ENCODE measurements at regions of chr2 and their contacts with region 1.

Region 1: GRCh38 chr2:196068271-196069209 is at the start of gene DNAH7:
- DNase-seq: peak; percentile 95
- H3K4me3 Mint-ChIP-seq: peak within 1 kb of the TSS; percentile 87
- H3K27ac Mint-ChIP-seq: no peak within 1 kb of the TSS
- H3K4me1 Mint-ChIP-seq: peaks cover 9% of the 10 kb centered on the region
- H3K27me3 Mint-ChIP-seq: peaks cover 2% of the 10 kb centered on the region
- total RNA-seq, gene DNAH7: 0.29 TPM in 1 of 2 experiments, not detected in the other

Region 2: GRCh38 chr2:194166818-194167217 is 1901.7 kb before region 1 on chr2:
- CTCF ChIA-PET with region 1: no interaction called
- intact Hi-C with region 1: loop called (anchors 2 kb)
- DNase-seq: peak; percentile 33
- H3K4me3 Mint-ChIP-seq: no peak overlapping the region
- H3K27ac Mint-ChIP-seq: no peak overlapping the region
- H3K4me1 Mint-ChIP-seq: no peaks in the 10 kb centered on the region
- H3K27me3 Mint-ChIP-seq: peaks cover 5% of the 10 kb centered on the region

Region 3: GRCh38 chr2:195407782-195408181 is 660.8 kb before region 1 on chr2:
- CTCF ChIA-PET with region 1: interaction called, 3 read pairs
- intact Hi-C with region 1: loop called (anchors 1 kb)
- DNase-seq: no peak
- H3K4me3 Mint-ChIP-seq: no peak overlapping the region
- H3K27ac Mint-ChIP-seq: no peak overlapping the region
- H3K4me1 Mint-ChIP-seq: peaks cover 18% of the 10 kb centered on the region
- H3K27me3 Mint-ChIP-seq: no peaks in the 10 kb centered on the region

Region 4: DNA sequence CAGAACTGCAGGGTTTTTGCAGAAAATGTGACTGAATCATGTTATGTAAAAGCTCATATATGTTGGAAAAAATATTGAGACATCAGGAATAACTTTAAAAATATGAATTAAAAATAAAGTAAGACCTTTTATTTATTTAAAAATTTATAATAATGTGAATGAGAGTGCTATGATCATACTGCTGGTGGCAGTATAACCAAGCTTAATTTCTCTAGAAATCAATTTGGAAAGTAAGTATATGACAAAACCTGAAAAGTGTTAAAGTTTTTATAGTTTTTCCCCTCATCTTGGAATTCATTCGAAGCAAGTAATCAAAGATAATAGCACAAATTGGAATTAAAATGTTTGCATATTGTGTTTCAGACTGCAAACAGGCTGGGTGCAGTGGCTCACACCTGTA is 404.0 kb before region 1 on chr2:
- CTCF ChIA-PET with region 1: interaction called, 18 read pairs
- intact Hi-C with region 1: loop called (anchors 1 kb)
- DNase-seq: no peak
- H3K4me3 Mint-ChIP-seq: no peak overlapping the region
- H3K27ac Mint-ChIP-seq: peak overlapping the region; percentile 41
- H3K4me1 Mint-ChIP-seq: peaks cover 56% of the 10 kb centered on the region
- H3K27me3 Mint-ChIP-seq: no peaks in the 10 kb centered on the region

Region 5: DNA sequence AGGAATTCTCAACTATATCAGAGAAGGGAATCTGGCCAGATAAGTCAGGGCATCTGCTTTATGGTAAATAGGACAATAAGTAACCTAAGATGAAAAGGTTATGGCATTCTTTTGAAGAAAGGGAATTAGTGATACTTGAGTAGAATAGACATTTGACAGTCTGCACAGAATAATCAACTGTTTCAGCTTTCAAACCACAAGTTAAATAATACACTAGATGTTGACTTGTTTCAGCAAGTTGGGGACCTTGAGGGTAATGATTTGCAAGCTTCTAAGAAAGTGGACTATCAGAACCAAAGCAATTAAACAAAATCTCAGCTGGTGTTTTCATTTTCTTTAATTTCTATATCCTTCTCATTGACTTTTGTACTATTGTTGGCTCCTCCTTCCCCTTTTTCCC is 357.1 kb before region 1 on chr2:
- CTCF ChIA-PET with region 1: no interaction called
- intact Hi-C with region 1: no loop called
- DNase-seq: no peak
- H3K4me3 Mint-ChIP-seq: no peak overlapping the region
- H3K27ac Mint-ChIP-seq: no peak overlapping the region
- H3K4me1 Mint-ChIP-seq: peaks cover 2% of the 10 kb centered on the region
- H3K27me3 Mint-ChIP-seq: no peaks in the 10 kb centered on the region

Region 6: DNA sequence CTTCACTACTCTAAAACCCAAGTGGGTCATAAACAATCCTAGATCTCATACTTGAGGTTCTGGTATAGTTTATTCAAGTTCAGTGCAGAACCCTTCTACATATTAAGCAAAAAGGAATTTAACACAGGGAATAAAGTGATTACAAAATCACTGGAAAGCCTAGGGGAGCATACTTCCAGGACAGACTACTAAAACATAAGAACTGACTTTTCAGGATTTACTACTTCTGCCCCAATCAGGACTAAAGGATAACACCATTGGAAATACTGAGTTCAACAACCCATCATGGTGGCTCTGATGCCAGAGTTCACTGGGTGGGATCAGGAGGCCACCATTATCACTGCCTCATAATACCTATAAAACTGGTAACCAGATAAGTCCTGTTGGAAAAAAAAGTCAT is 123.5 kb before region 1 on chr2:
- CTCF ChIA-PET with region 1: no interaction called
- intact Hi-C with region 1: loop called (anchors 2 kb)
- DNase-seq: no peak
- H3K4me3 Mint-ChIP-seq: no peak overlapping the region
- H3K27ac Mint-ChIP-seq: no peak overlapping the region
- H3K4me1 Mint-ChIP-seq: no peaks in the 10 kb centered on the region
- H3K27me3 Mint-ChIP-seq: peaks cover 2% of the 10 kb centered on the region

Region 7: DNA sequence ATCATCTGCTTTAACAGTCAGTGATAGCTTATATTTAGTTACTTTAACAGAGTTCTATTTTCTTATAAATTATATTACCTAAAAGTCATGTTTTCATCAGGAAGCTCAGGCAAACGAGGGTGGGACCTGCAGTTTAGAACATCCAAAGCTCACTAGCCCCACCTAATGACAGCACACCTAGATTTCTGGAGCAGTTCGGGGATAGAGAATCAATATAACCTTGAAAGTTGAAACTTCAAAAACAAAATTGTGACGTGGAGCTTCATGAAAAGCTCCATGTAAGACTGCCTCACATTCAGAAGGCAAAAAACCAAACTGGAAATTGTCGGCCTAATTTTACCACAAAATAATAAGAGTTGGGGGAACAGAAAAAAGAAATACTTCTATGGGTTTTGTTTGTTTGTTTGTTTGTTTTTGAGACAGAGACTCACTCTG is 385.1 kb after region 1 on chr2:
- CTCF ChIA-PET with region 1: interaction called, 13 read pairs
- intact Hi-C with region 1: loop called (anchors 2 kb)
- DNase-seq: peak; percentile 63
- H3K4me3 Mint-ChIP-seq: no peak overlapping the region
- H3K27ac Mint-ChIP-seq: no peak overlapping the region
- H3K4me1 Mint-ChIP-seq: peaks cover 2% of the 10 kb centered on the region
- H3K27me3 Mint-ChIP-seq: peaks cover 16% of the 10 kb centered on the region

Region 8: DNA sequence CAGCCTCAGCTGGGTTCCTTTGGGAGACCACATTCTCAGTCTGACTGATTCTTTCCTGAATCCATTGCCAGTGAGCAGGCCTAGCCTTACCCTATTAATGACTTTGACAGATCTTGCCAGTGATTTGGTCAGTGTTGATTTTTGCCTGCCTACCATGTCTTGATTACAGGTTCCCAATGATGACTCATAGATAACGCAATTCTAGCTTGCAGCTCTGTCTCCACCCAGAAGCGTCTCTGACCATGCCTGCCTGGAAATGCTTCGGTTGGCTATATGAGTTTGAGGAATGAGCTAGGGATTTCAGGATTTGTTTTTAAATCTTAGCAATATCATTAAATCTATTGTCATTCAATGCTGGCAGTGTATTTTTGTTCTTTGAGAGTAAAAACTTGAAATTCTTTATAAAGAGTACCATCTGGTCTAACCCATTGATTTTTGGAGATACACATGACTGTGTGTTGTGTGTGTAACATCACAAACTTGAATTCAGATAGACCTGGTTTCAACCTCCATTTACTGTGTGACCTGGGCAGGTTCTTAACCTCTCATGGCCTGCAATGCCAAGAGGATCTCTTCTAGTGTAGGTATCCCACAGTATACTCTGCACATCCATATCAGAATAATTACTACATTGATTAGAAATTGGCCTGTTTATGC is 628.0 kb after region 1 on chr2:
- CTCF ChIA-PET with region 1: no interaction called
- intact Hi-C with region 1: no loop called
- DNase-seq: no peak
- H3K4me3 Mint-ChIP-seq: no peak overlapping the region
- H3K27ac Mint-ChIP-seq: no peak overlapping the region
- H3K4me1 Mint-ChIP-seq: no peaks in the 10 kb centered on the region
- H3K27me3 Mint-ChIP-seq: peaks cover 4% of the 10 kb centered on the region

Region 9: DNA sequence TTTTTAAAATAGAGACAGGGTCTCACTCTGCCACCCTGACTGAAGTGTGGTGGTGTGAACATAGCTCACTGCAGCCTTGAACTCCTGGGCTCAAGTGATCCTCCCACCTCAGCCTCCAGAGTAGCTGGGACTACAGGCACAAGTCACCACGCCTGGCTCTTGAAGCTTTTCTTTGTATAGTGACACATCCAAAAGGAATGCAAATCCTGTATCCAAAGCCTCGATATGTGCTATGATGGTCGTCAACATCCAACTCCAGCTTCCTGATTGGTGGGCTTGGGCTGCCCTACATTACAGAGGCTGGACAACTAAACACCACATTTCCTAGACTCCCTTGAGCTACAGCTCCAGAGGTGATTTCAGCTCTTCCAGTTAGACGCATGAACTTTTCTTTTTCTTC is 959.7 kb after region 1 on chr2:
- CTCF ChIA-PET with region 1: no interaction called
- intact Hi-C with region 1: no loop called
- DNase-seq: no peak
- H3K4me3 Mint-ChIP-seq: no peak overlapping the region
- H3K27ac Mint-ChIP-seq: peak overlapping the region; percentile 42
- H3K4me1 Mint-ChIP-seq: peaks cover 14% of the 10 kb centered on the region
- H3K27me3 Mint-ChIP-seq: no peaks in the 10 kb centered on the region